A549 (cell line): ENCODE measurements at regions of chr20 and their contacts with region 1.

Region 1: GRCh38 chr20:9903048-9903655 is 64.3 kb upstream of the PAK5 start:
- DNase-seq: peak; percentile 18 to 29
- ATAC-seq: peak in 1 of 2 experiments; percentile 71; a peak in 3 of 6 replicates
- H3K4me3 ChIP-seq: no peak overlapping the region
- H3K27ac ChIP-seq: no peak overlapping the region
- H3K4me1 ChIP-seq: no peaks in the 10 kb centered on the region
- CTCF ChIP-seq: peak; percentile 46
- EP300 ChIP-seq: no peak
- POLR2A ChIP-seq: no peak
- RAD21 ChIP-seq: peak in 1 of 2 experiments; percentile 22; a peak in 1 of 5 replicates

Region 2: DNA sequence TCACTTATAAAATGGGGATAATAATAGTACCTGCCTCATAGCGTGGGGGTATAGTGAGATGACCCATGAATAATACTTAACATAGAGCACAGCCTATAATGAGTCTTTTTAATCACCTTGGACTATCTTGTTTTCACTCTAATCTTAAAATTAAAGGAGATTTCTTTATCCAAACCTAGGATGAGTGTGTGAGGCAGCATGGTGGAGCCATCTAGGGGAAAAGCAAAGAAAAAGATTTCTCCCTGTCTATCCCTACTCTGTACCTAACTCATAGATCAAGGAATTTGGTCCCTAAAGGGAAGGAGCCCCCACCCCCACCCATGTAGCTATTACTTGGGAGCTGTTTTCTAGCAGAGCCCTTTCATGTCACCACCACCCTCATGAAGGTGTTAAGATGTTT is 19.1 kb before region 1 on chr20:
- CTCF ChIA-PET with region 1: interaction called, 10 read pairs
- POLR2A ChIA-PET with region 1: no interaction called
- DNase-seq: no peak
- ATAC-seq: peak; percentile 85 to 90; a peak in 5 of 6 replicates
- H3K4me3 ChIP-seq: no peak overlapping the region
- H3K27ac ChIP-seq: no peak overlapping the region
- H3K4me1 ChIP-seq: no peaks in the 10 kb centered on the region
- CTCF ChIP-seq: peak; percentile 43
- EP300 ChIP-seq: no peak
- POLR2A ChIP-seq: no peak
- RAD21 ChIP-seq: peak; percentile 41 to 60

Region 3: DNA sequence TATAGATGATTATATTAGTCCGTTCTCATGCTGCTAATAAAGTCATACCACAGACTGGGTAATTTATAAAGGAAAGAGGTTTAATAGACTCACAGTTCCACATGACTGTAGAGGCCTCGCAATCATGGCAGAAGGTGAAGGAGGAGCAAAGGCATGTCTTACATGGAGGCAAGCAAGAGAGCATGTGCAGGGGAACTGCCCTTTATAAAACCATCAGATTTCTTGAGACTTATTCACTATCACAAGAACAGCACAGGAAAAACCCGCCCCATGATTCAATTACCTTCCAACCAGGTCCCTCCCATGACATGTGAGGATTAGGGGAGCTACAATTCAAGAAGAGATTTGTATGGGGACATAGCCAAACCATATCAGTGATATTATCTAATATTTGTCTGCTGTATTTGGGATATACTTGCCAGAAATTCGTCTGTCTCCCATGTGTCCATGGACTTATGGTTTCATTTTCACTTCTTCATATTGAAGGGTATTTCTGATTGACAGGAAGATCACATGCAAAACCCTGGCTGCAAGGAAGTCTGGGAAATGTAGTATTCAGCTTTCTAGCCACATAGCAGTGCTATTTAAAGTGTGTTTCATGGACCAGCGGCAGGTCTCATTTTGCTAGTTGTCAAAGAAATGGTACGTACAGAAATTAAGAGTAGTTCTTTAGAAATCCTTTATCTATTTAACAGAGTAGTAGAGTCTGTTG is 13.7 kb before region 1 on chr20:
- CTCF ChIA-PET with region 1: interaction called, 11 read pairs
- POLR2A ChIA-PET with region 1: no interaction called
- DNase-seq: peak in 1 of 2 experiments; percentile 16
- ATAC-seq: peak in 1 of 2 experiments; percentile 53; a peak in 2 of 6 replicates
- H3K4me3 ChIP-seq: no peak overlapping the region
- H3K27ac ChIP-seq: no peak overlapping the region
- H3K4me1 ChIP-seq: no peaks in the 10 kb centered on the region
- CTCF ChIP-seq: no peak
- EP300 ChIP-seq: no peak
- POLR2A ChIP-seq: no peak
- RAD21 ChIP-seq: no peak